Activated CD8-positive, alpha-beta T cell treated with anti-CD3 and anti-CD28 coated beads for 36 hours (primary cell): ENCODE measurements at regions of chr17 and their contacts with region 1.

Region 1: GRCh38 chr17:8222630-8223356 is 12.4 kb upstream of the AURKB start:
- DNase-seq: peak; percentile 95
- ATAC-seq: peak; percentile 40
- H3K4me3 Mint-ChIP-seq: peak overlapping the region; percentile 97
- H3K27ac Mint-ChIP-seq: peak overlapping the region; percentile 99
- H3K4me1 Mint-ChIP-seq: peaks cover 34% of the 10 kb centered on the region
- H3K27me3 Mint-ChIP-seq: peaks cover 8% of the 10 kb centered on the region
- CTCF ChIP-seq: no peak

Region 2: DNA sequence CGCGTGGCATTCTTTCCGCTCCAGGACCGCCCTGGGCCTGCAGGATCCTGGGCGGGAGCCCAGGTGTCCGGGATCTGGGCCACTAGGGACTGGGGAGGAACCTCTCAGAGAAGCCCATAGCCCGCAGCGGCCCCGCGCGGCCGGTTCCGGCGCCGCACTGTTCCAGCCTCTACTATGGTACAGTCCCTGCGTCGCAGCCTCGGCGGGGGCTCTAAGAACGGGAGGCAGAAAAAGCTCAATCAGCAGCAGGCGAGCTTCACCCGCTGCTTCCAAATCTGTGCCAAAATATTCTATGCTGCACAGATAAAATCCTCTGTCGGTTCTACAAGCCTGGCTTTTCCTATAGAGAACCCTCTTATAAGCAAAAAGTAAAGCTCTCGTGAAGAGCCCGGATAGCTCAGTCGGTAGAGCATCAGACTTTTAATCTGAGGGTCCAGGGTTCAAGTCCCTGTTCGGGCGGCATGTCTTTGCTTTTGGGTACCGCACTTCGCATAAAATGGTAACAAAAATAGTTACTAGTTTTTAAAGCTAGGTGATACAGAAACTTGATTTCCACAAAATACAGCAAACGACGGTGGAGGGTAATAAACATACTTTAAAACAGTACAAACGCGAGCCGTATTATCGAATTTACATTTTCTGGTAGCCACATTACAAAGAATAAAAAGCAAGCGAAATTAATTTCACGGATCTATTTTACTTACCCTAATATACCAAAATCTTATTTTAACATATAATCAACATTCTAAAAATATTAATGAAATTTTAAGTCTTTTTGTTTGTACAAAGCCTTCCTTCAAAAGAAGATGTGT is 103.8 kb before region 1 on chr17:
- CTCF ChIA-PET with region 1: interaction called, 47 read pairs
- POLR2A ChIA-PET with region 1: interaction called, 34 read pairs
- intact Hi-C with region 1: loop called (anchors 2 kb)
- DNase-seq: peak; percentile 95
- ATAC-seq: peak; percentile 57
- H3K4me3 Mint-ChIP-seq: peak overlapping the region; percentile 97
- H3K27ac Mint-ChIP-seq: peak overlapping the region; percentile 95
- H3K4me1 Mint-ChIP-seq: peaks cover 35% of the 10 kb centered on the region
- H3K27me3 Mint-ChIP-seq: peaks cover 43% of the 10 kb centered on the region
- CTCF ChIP-seq: peak; percentile 94

Region 3: GRCh38 chr17:8189711-8190477 is 32.9 kb before region 1 on chr17 and contains the start of gene BORCS6:
- CTCF ChIA-PET with region 1: interaction called, 31 read pairs
- POLR2A ChIA-PET with region 1: interaction called, 143 read pairs
- intact Hi-C with region 1: loop called (anchors 1 kb)
- DNase-seq: peak; percentile 98
- ATAC-seq: peak; percentile 67
- H3K4me3 Mint-ChIP-seq: no peak within 1 kb of the TSS
- H3K27ac Mint-ChIP-seq: peak within 1 kb of the TSS; percentile 90
- H3K4me1 Mint-ChIP-seq: peaks cover 10% of the 10 kb centered on the region
- H3K27me3 Mint-ChIP-seq: no peaks in the 10 kb centered on the region
- CTCF ChIP-seq: no peak
- total RNA-seq, gene BORCS6: 5.5 to 6.2 TPM

Region 4: DNA sequence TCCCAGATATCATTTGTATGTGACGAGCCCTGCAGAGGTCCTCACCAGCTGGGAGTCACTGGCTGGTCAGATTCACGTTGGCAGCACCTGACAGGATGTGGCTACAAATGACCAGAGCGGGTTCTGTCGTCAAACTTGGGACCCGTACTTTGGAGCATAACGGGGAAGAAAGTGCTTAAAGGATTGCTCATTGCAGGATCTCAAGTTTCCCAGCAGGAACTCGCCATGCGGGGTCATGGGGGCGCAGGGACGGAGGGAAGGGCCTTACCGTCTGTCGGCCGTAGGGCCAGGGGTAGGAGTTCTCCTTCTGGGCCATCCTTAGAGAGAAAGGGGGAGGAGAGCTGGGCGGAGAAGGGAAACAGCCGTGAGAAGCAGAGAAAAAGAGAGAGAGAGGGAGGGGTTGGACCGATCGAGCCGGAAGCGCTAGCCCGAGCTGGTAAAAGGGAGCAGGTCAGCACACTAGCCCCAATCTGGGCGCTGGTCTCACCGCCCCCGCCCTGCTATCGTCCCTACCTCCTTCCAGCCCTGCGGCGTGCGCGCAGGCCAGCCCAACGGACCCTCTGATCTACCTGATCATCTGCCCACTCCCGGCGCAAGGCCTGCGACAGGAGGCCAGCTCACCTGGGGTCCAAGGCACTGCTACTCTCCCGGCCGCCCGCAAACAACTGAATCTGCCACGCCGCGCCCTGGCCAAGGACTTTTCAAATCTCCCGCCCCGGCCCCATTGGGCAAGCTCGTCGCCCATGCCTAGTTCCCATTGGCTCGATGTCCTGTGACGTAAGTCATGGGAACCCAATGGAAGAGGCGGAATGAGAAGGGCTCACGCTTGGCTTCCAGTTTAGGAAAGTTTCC is 12.7 kb before region 1 on chr17 and contains the start of gene AURKB:
- CTCF ChIA-PET with region 1: interaction called, 8 read pairs
- POLR2A ChIA-PET with region 1: interaction called, 113 read pairs
- intact Hi-C with region 1: loop called (anchors 1 kb)
- DNase-seq: peak; percentile 97
- ATAC-seq: peak; percentile 96
- H3K4me3 Mint-ChIP-seq: peak within 1 kb of the TSS; percentile 91
- H3K27ac Mint-ChIP-seq: peak within 1 kb of the TSS; percentile 96
- H3K4me1 Mint-ChIP-seq: peaks cover 12% of the 10 kb centered on the region
- H3K27me3 Mint-ChIP-seq: no peaks in the 10 kb centered on the region
- CTCF ChIP-seq: no peak
- total RNA-seq, gene AURKB: 170 to 174 TPM

Region 5: GRCh38 chr17:8294814-8295316 is 72.1 kb after region 1 on chr17:
- CTCF ChIA-PET with region 1: interaction called, 11 read pairs
- POLR2A ChIA-PET with region 1: interaction called, 11 read pairs
- intact Hi-C with region 1: loop called (anchors 5 kb)
- DNase-seq: no peak
- ATAC-seq: no peak
- H3K4me3 Mint-ChIP-seq: peak overlapping the region; percentile 77
- H3K27ac Mint-ChIP-seq: peak overlapping the region; percentile 78
- H3K4me1 Mint-ChIP-seq: peaks cover 32% of the 10 kb centered on the region
- H3K27me3 Mint-ChIP-seq: no peaks in the 10 kb centered on the region
- CTCF ChIP-seq: no peak

Region 6: DNA sequence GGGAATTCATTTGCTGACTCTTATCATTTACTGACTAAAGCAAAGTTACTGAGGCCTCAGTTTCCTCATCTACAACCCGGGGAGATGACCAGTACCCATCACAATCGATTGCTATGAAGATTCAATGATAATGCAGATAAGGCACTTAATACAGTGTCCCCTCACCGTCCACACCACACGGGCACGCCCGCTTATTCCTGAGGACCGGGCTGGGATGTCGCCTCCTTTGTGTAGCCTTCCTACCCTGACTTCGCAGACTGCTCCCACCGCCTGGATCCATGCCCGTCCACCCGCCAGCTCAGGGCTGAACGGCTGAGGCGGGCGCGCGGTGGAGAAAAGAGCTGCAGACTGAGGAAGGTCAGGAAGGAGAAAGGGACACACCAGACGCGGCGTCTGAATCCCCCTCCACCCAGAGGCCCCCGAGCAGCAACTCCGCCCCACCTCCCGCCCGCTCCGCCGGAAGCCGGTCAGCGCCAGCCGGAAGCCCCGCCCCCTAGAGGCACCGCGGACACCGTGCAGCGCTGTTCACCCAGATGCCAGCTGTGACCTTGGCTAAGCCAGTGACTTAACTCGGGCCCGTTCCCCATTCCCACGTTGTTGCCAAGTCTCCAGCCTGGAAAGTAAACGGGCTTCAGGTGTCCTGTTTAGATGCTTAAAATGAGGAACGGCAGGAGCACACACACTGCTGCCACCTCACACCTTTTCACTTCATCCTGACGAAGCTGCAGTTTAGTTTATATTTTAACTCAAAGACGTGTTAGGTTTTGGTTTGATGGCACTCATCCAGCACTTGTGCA is 153.7 kb after region 1 on chr17 and contains the start of gene KRABD2:
- CTCF ChIA-PET with region 1: no interaction called
- POLR2A ChIA-PET with region 1: interaction called, 17 read pairs
- intact Hi-C with region 1: no loop called
- DNase-seq: peak; percentile 93
- ATAC-seq: peak; percentile 99
- H3K4me3 Mint-ChIP-seq: peak within 1 kb of the TSS; percentile 81
- H3K27ac Mint-ChIP-seq: peak within 1 kb of the TSS; percentile 77
- H3K4me1 Mint-ChIP-seq: peaks cover 49% of the 10 kb centered on the region
- H3K27me3 Mint-ChIP-seq: no peaks in the 10 kb centered on the region
- CTCF ChIP-seq: peak; percentile 42